Activated CD4-positive, alpha-beta memory T cell treated with anti-CD3 and anti-CD28 coated beads for 36 hours (primary cell): ENCODE measurements at regions of chr17 and their contacts with region 1.

Region 1: DNA sequence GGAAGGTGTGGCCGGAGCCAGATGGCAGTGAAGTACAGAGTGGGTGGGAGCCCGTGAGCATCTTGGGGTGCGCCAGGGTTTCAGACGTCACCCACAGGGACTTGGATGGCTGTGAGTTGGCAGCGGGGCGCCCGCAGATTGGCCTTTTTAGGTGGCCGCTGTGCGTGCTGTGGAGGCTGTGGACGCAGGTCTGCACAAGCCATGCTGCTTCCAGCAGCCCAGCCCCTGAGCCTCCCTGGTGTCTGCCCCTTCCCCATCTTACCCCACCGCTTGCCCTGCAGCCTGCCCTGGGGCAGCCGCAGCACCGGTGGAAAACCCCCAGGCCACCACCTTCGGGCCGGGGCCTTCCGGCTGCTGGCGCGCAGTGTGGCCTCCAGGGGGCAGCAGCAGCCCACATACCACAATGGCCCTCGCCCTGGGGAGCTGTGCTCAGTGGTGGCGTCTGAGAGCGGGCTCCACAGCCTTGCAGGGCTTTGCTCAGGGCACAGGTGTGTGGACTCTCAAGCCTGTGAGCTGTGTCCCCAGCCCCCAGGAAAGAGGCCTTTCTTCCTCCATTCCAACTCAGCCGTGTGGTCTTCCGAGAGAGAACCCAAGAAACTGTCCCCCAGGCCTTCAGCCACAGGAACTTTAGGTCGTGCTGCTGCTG is 11.8 kb downstream of the ENDOV start:
- DNase-seq: peak; percentile 91
- H3K4me3 Mint-ChIP-seq: no peak overlapping the region
- H3K27ac Mint-ChIP-seq: no peak overlapping the region
- H3K4me1 Mint-ChIP-seq: peaks cover 8% of the 10 kb centered on the region
- H3K27me3 Mint-ChIP-seq: no peaks in the 10 kb centered on the region

Region 2: DNA sequence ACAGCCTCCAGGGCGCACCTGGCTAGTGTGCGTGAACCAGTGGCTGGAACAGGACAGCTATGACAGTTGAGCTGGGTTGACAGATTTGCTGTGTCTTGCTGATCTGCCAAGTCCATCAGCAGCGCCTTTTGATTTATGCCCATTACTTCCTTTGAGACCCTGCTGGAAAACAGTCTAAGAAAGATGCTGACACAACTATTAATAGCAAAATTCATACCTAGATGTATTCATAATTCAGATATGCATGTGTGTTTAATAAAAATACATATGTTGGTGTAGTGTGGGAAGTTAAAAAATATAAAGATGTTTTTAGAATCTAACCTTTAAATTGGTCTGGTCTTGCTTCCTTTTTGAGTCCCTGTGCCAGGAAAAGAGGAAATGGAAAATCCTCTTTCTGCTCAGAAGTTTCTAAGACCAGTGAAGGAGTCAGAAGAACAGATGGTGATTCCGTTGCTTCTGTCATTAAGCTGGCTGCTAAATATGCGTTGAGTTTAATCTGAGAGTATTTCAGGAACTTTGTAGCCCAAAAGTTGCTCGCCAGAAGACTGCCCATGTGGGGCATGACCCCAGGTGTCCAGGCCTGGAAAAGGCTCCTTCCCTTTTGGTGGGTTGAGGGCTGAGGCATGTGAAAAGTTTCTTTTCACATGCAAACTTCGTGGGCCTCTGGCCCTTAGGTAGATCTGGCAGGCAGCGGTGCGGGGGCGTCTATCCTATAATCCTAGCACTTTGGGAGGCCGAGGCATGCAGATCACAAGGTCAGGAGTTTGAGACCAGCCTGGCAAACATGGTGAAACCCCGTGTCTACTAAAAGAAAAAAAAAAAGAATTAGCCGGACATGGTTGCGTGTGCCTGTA is 51.8 kb before region 1 on chr17:
- CTCF ChIA-PET with region 1: no interaction called
- POLR2A ChIA-PET with region 1: no interaction called
- intact Hi-C with region 1: no loop called
- DNase-seq: no peak
- H3K4me3 Mint-ChIP-seq: no peak overlapping the region
- H3K27ac Mint-ChIP-seq: peak overlapping the region; percentile 28
- H3K4me1 Mint-ChIP-seq: peaks cover 2% of the 10 kb centered on the region
- H3K27me3 Mint-ChIP-seq: no peaks in the 10 kb centered on the region

Region 3: DNA sequence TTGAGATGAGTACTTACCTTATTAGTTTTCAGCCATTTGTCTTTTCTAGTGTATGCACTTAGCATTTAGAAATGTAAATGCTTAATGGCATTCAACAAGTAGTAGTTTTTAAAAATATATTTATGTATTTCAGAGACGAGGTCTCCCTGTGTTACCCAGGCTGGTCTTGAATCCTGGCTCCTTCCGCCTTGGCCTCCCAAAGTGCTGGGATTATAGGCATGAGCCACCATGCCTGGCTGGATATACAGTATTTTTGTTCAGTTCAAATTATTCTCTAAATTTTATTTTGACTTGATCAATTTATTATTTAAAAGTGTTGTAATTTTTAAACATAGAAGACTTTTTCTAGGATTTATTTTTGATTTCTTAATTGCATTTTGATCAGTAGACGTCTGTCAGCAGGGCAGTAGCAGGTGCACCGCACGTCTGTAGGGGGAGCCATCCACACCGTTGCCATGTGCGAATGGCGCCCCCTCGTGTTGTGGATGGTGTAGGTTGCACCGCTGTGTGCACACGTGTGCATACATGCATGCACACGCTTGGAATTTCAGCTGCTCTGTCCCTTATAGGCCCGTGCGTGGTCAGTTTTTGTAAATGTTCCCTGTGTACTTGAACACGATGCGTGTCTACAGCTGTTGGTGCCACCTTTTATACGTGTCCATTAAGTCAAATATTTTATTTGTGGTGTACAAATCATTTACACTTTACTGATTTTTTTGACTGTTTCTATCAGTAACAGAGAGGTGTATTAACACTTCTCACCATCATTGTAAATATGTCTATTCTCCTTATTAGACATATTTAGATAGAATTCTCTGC is 148.5 kb after region 1 on chr17:
- CTCF ChIA-PET with region 1: interaction called, 30 read pairs
- POLR2A ChIA-PET with region 1: no interaction called
- intact Hi-C with region 1: loop called (anchors 1 kb)
- DNase-seq: peak; percentile 94
- H3K4me3 Mint-ChIP-seq: no peak overlapping the region
- H3K27ac Mint-ChIP-seq: no peak overlapping the region
- H3K4me1 Mint-ChIP-seq: peaks cover 9% of the 10 kb centered on the region
- H3K27me3 Mint-ChIP-seq: no peaks in the 10 kb centered on the region

Region 4: GRCh38 chr17:80970044-80970761 is 543.4 kb after region 1 on chr17:
- CTCF ChIA-PET with region 1: interaction called, 35 read pairs
- POLR2A ChIA-PET with region 1: no interaction called
- intact Hi-C with region 1: no loop called
- DNase-seq: peak; percentile 69
- H3K4me3 Mint-ChIP-seq: no peak overlapping the region
- H3K27ac Mint-ChIP-seq: no peak overlapping the region
- H3K4me1 Mint-ChIP-seq: peaks cover 5% of the 10 kb centered on the region
- H3K27me3 Mint-ChIP-seq: no peaks in the 10 kb centered on the region

Region 5: DNA sequence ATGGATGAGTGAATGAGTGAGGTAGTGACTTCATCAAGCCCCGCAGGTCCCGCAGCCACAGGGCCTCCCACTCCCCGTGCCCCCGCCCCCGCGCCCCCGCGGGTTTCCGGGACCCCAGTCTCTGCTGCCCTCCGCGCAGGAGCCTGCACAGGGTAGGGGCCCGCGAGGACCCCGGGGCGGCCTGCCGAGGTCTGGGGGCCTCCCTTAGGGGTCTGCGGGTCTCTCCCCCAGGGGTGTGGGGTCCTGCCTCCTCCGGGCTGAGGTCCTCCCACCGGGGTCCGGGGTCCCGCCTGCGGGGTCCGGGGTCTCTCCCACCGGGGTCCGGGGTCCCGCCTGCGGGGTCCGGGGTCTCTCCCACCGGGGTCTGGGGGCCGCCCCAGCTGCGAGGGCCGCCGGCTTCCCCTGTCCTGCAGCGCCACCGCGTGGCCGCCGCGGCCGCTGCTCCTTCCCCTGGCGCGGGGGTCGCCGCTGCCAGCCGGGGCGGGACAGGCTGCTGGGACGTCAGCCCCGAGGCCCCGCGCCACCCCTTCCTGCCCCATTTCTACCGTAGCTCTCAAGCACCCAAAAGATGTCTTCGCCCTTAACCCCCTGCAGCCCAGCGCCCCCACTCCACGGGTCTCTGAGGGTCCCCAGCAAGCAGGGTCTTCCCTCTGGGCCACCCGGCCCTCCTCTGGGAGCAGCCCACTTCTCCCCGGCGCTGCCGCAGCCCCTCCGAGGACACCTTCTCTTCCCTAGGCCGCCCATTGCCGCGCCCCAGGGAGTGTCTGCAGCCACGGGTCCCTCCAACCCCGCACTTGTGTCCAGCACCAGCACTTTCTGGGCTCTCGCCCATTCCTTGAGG is 554.5 kb after region 1 on chr17:
- CTCF ChIA-PET with region 1: interaction called, 13 read pairs
- POLR2A ChIA-PET with region 1: no interaction called
- intact Hi-C with region 1: loop called (anchors 2 kb)
- DNase-seq: peak; percentile 43
- H3K4me3 Mint-ChIP-seq: no peak overlapping the region
- H3K27ac Mint-ChIP-seq: no peak overlapping the region
- H3K4me1 Mint-ChIP-seq: peaks cover 11% of the 10 kb centered on the region
- H3K27me3 Mint-ChIP-seq: peaks cover 4% of the 10 kb centered on the region